CD14-positive monocyte (primary cell): ENCODE measurements at regions of chr1 and their contacts with region 1.

Region 1: DNA sequence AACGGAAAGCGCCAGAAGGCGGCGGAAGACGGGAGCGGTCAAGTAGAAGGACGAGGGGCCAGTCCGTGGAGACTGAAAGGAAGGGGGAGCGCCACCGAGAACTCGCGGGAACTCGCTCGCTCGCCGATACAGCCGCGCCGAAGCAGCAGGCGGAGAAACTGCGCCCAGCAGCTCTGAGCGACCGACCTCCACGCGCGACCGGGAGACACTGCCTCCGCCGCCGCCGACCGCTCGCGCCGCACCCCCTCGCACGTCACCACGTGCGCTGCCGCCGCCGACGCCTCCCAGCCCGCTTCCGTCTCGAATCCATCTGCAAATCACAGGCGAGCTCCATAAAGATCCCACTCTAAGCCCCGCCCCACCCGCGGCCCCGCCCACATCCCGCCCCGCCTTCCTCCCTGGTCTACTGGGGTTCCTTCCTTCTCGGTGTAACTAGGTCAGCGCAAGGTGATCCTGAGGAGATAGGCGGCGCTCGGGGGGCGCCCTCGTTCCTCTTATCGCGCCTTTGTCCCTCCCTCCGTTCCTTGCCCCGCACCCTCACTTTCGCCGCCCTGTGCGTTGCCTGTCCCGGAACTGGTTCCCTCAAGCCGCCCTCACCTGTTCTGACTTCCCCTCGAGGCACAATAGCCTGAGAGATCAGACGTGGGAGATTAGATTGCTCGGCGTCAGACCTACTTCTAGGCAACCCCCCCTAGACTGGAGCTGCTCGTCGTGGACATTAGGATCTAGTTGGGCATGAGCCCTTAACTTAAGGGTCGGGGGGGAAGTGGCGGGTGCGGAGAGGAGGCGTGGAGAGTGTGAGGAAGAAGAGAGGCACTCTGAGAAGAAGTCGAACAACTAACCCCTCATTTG is at the start of gene IVNS1ABP:
- DNase-seq: peak; percentile 92 to 98 (median 97)
- H3K4me3 ChIP-seq: peak within 1 kb of the TSS; percentile 87 to 99 (median 94)
- H3K4me3 Mint-ChIP-seq: peak within 1 kb of the TSS; percentile 92 to 98
- H3K27ac ChIP-seq: peak within 1 kb of the TSS; percentile 92 to 97
- H3K27ac Mint-ChIP-seq: peak within 1 kb of the TSS; percentile 99 to 100 (median 100)
- H3K4me1 ChIP-seq: peaks cover 45 to 47% of the 10 kb centered on the region in 2 donors
- H3K4me1 Mint-ChIP-seq: peaks cover 46% of the 10 kb centered on the region
- H3K27me3 ChIP-seq: no peaks in the 10 kb centered on the region
- H3K27me3 Mint-ChIP-seq: no peaks in the 10 kb centered on the region
- CTCF ChIP-seq: no peak
- polyA plus RNA-seq, gene IVNS1ABP: 50.9 to 97.7 (median 69.2) TPM

Region 2: GRCh38 chr1:185045814-185046492 is 271.3 kb before region 1 on chr1:
- intact Hi-C with region 1: no loop called
- DNase-seq: peak in 1 of 3 donors; percentile 10
- H3K4me3 ChIP-seq: peak overlapping the region; percentile 69 to 88 (median 88)
- H3K4me3 Mint-ChIP-seq: peak overlapping the region; percentile 97 to 98
- H3K27ac ChIP-seq: peak overlapping the region; percentile 65 to 80
- H3K27ac Mint-ChIP-seq: peak overlapping the region; percentile 73 to 92 (median 90)
- H3K4me1 ChIP-seq: peaks cover 25 to 41% of the 10 kb centered on the region in 2 donors
- H3K4me1 Mint-ChIP-seq: peaks cover 48% of the 10 kb centered on the region
- H3K27me3 ChIP-seq: no peaks in the 10 kb centered on the region
- H3K27me3 Mint-ChIP-seq: peaks cover 0 to 2% (median 1%) of the 10 kb centered on the region in 3 donors
- CTCF ChIP-seq: no peak

Region 3: GRCh38 chr1:185373813-185374529 is 56.7 kb after region 1 on chr1:
- intact Hi-C with region 1: loop called (anchors 2 to 5 kb)
- DNase-seq: peak; percentile 91 to 97 (median 95)
- H3K4me3 ChIP-seq: peak overlapping the region in 1 of 3 experiments; percentile 7
- H3K4me3 Mint-ChIP-seq: peak overlapping the region in 1 of 2 donors; percentile 48
- H3K27ac ChIP-seq: peak overlapping the region; percentile 69 to 97
- H3K27ac Mint-ChIP-seq: no peak overlapping the region
- H3K4me1 ChIP-seq: peaks cover 53 to 54% of the 10 kb centered on the region in 2 donors
- H3K4me1 Mint-ChIP-seq: peaks cover 21% of the 10 kb centered on the region
- H3K27me3 ChIP-seq: no peaks in the 10 kb centered on the region
- H3K27me3 Mint-ChIP-seq: no peaks in the 10 kb centered on the region
- CTCF ChIP-seq: no peak

Region 4: DNA sequence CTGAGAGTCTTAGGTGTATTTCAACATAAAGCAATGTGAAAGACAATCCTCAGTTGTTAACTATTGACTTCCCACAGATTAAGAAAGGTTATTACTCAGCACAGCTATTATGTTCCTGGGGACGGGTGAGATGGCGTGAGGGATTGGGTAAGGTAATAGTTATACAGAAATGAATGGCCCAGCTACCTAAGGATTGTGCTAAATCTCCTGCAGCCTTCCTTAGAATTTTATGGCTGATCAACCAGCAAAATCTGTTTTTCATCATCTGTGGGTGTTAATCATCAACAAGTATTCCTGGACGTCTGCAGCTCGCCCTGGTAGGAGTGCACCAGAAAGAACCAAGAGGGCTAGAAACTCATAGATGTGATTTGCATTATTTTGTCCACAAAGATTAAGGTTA is 145.8 kb after region 1 on chr1:
- intact Hi-C with region 1: no loop called
- DNase-seq: no peak
- H3K4me3 ChIP-seq: no peak overlapping the region
- H3K4me3 Mint-ChIP-seq: no peak overlapping the region
- H3K27ac ChIP-seq: no peak overlapping the region
- H3K27ac Mint-ChIP-seq: no peak overlapping the region
- H3K4me1 ChIP-seq: peaks cover 16 to 21% of the 10 kb centered on the region in 2 donors
- H3K4me1 Mint-ChIP-seq: peaks cover 14% of the 10 kb centered on the region
- H3K27me3 ChIP-seq: no peaks in the 10 kb centered on the region
- H3K27me3 Mint-ChIP-seq: peaks cover 0 to 3% (median 0%) of the 10 kb centered on the region in 3 donors
- CTCF ChIP-seq: no peak

Region 5: GRCh38 chr1:185670187-185670627 is 352.9 kb after region 1 on chr1:
- intact Hi-C with region 1: loop called in 1 of 2 experiments (anchors 10 kb)
- DNase-seq: peak in 2 of 3 donors; percentile 10 to 24
- H3K4me3 ChIP-seq: no peak overlapping the region
- H3K4me3 Mint-ChIP-seq: no peak overlapping the region
- H3K27ac ChIP-seq: no peak overlapping the region
- H3K27ac Mint-ChIP-seq: no peak overlapping the region
- H3K4me1 ChIP-seq: peaks cover 20 to 31% of the 10 kb centered on the region in 2 donors
- H3K4me1 Mint-ChIP-seq: peaks cover 24% of the 10 kb centered on the region
- H3K27me3 ChIP-seq: no peaks in the 10 kb centered on the region
- H3K27me3 Mint-ChIP-seq: peaks cover 0 to 2% (median 0%) of the 10 kb centered on the region in 3 donors
- CTCF ChIP-seq: peak; percentile 40